ENCODE measurements at regions of chr10 and their contacts with region 1.

Region 1: DNA sequence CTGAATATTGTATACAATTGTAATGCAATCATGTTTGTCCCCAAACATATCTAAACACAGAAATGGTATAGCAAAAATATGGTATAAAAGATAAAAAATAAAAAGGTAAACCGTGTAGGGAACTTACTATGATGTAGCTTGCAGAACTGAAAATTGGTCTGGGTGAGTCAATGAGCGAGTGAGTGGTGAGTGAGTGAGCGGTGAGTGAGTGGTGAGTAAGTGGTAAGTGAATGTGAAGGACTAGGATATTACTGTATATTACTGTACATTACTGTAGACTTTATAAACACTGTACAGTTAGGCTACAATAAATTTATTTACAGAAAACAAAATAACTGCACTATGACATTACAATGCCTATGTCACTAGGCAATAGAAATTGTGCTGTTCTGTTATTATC is 1163.2 kb upstream of the SORCS1 start:
- DNase-seq: no peak
- H3K4me3 ChIP-seq: no peak overlapping the region
- H3K27ac ChIP-seq: no peak overlapping the region
- H3K27me3 ChIP-seq: peaks cover 0 to 3% (median 0%) of the 10 kb centered on the region in 45 donors
- CTCF ChIP-seq: no peak

Region 2: DNA sequence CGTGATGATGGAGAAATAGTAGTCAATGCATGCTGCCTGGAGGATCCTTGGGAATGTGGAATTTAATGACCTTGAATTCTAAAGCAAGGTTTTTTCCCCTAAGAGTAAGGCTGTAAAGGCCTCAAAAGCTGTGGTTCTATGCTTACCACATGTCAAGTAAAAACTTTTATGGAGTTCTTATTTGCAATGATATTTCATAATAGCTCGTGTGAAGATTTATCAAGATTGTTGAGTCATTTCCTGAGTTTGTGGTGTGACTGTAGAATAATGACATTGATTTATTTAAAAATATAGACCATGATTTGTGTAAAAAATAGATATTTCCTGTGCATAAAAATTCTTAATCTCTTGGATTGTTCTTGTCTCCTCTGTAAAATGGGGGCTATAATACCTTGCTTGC is 1095.7 kb before region 1 on chr10:
- intact Hi-C with region 1: loop called in 1 of 2 experiments (anchors 10 kb)
- DNase-seq: no peak
- H3K4me3 ChIP-seq: no peak overlapping the region
- H3K27ac ChIP-seq: no peak overlapping the region
- H3K27me3 ChIP-seq: peaks cover 0 to 4% (median 0%) of the 10 kb centered on the region in 45 donors
- CTCF ChIP-seq: no peak